ENCODE measurements at regions of chr12 and their contacts with region 1.

Region 1: DNA sequence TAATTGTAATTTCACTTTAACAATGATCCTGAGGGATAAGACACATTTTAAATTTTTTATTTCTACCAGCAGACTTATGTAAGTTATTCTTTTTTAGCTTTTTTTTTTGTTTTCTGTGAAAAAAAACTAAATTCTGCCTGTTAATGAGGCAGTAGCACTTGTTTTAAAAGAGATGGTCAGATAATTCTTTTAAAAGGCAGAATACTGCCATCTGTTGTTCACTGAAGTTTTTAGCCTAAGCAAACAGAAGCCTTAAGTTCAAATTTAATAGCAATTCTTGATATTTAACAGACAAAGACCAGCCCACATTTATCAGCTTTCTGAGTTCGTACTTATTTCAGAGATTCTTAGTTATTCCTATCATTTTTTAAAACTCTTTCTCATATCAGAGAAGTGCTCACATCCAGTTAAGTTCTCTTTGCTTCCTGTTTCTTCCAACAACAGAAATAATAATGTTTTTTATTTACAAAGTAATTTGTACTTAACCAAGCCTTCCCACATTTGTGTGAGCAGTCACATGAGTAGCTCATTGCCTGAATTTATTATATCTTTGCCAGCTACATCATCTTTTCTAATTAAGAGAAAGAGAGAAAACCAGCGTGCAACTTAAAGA is 93.4 kb upstream of the SLCO1C1 start:
- DNase-seq: no peak
- H3K4me3 ChIP-seq: peak overlapping the region in 2 of 4 donors; percentile 1 to 5
- H3K27ac ChIP-seq: peak overlapping the region; percentile 42 to 80 (median 69)
- H3K4me1 ChIP-seq: peaks cover 0 to 44% (median 18%) of the 10 kb centered on the region in 4 donors
- H3K27me3 ChIP-seq: no peaks in the 10 kb centered on the region
- CTCF ChIP-seq: peak; percentile 20 to 57 (median 38)
- EP300 ChIP-seq: no peak
- POLR2A ChIP-seq: no peak

Region 2: GRCh38 chr12:19744734-19745218 is 857.0 kb before region 1 on chr12:
- intact Hi-C with region 1: loop called (anchors 5 kb)
- DNase-seq: no peak
- H3K4me3 ChIP-seq: no peak overlapping the region
- H3K27ac ChIP-seq: peak overlapping the region in 1 of 4 donors; percentile 17
- H3K4me1 ChIP-seq: peaks cover 0 to 42% (median 17%) of the 10 kb centered on the region in 4 donors
- H3K27me3 ChIP-seq: no peaks in the 10 kb centered on the region
- CTCF ChIP-seq: no peak
- EP300 ChIP-seq: peak in 1 of 4 donors; percentile 43
- POLR2A ChIP-seq: no peak

Region 3: DNA sequence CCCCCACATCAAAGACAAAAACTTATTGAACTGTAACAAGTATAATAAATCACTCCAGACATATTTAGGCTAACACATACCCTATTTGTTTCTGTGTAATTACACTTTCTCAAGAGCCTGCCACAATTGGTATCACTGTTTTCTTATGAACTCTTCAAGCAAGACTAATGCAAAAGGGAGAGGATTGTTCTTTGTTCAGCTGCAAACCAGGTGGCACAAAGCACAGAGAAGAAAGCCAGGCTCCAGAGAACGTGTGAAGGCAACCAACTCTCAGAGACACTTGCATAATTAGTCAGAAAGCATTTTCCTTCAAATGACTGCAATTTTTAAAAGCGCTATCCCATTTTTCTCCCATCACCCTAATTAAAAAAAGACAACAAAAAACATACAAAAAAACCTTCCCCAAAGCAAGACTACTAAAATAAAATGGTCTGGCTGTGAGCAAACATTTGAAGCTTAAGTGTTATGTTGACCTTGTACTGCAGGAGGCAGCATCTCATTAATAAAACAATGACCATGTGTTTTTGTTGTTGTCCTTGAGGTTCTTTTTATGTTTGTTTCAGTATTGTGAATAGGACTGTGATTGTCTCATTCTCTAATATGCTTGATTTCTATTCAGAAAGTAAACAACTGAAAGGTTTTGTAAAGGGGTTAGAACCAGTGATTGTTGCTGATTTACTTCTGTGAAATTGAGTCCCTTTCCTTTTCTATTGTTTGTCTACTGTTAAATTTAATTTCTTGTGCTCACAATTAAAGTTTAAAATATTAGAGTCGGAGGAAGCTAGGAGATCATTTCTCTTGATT is 686.2 kb before region 1 on chr12:
- intact Hi-C with region 1: loop called (anchors 10 kb)
- DNase-seq: no peak
- H3K4me3 ChIP-seq: no peak overlapping the region
- H3K27ac ChIP-seq: no peak overlapping the region
- H3K4me1 ChIP-seq: peaks cover 0 to 19% (median 12%) of the 10 kb centered on the region in 4 donors
- H3K27me3 ChIP-seq: no peaks in the 10 kb centered on the region
- CTCF ChIP-seq: peak; percentile 52 to 75 (median 54)
- EP300 ChIP-seq: no peak
- POLR2A ChIP-seq: no peak

Region 4: DNA sequence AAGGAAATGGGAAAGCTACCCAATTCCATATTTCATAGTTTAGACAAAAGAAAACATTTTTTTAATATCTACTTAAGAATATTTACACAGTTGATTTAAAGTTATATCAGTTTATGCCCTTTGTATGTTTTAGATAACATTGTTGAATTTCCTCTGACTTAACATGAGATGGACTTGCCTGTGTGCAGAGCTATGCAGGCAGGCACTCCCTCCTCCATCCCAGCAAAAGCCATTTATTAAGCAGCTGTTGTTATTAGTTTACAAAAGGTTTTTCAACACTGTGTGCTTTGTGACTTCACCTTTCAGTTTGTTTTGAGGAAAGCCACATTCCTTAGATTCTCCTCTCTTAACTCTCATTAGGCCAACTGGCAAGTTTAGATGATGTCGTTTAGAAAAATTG is 570.9 kb before region 1 on chr12:
- intact Hi-C with region 1: loop called (anchors 10 kb)
- DNase-seq: no peak
- H3K4me3 ChIP-seq: no peak overlapping the region
- H3K27ac ChIP-seq: peak overlapping the region in 2 of 4 donors; percentile 15 to 32
- H3K4me1 ChIP-seq: peaks cover 0 to 24% (median 2%) of the 10 kb centered on the region in 4 donors
- H3K27me3 ChIP-seq: no peaks in the 10 kb centered on the region
- CTCF ChIP-seq: no peak
- EP300 ChIP-seq: no peak
- POLR2A ChIP-seq: no peak

Region 5: GRCh38 chr12:20463913-20464524 is 137.8 kb before region 1 on chr12:
- intact Hi-C with region 1: loop called (anchors 2 kb)
- DNase-seq: no peak
- H3K4me3 ChIP-seq: no peak overlapping the region
- H3K27ac ChIP-seq: peak overlapping the region in 3 of 4 donors; percentile 70 to 77 (median 75)
- H3K4me1 ChIP-seq: peaks cover 0 to 37% (median 27%) of the 10 kb centered on the region in 4 donors
- H3K27me3 ChIP-seq: no peaks in the 10 kb centered on the region
- CTCF ChIP-seq: peak; percentile 48 to 59 (median 54)
- EP300 ChIP-seq: no peak
- POLR2A ChIP-seq: no peak

Region 6: DNA sequence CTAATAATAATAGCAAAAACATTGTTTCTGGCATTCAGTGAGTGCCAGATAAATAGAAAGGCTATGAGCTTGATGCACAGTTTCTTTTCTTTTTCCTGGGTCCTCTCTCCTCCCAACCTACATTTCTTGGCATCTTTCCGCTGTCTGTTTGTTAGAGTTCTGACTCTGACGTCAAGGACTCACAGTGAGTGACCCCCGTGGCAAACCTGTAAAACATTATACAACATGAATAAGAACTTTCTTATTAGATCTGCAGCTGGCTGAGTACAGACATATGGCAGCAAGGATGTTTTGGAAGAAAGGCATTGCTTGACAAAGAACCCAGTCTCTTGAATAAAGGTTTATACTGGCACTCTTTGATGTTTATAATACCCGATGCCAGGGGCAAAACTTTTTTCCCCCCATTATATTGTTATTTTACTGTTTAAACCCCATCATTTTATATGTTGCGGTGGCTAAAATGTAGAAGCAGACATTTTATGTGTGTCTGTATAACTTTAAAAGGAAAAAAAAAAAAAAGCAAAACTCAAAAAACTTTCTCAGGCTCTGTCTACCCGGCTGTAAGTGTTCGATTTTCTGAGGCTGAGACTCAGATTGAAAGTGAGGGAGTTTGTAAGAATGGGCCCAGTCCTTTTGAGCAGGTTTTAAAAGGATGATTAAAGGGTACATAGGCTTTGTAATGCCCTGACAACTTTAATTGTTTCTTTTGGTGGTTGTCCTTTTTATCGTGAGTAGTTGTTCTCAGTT is 74.2 kb before region 1 on chr12:
- intact Hi-C with region 1: no loop called
- DNase-seq: no peak
- H3K4me3 ChIP-seq: peak overlapping the region in 3 of 4 donors; percentile 5 to 20 (median 9)
- H3K27ac ChIP-seq: peak overlapping the region; percentile 66 to 78 (median 70)
- H3K4me1 ChIP-seq: peaks cover 0 to 44% (median 15%) of the 10 kb centered on the region in 4 donors
- H3K27me3 ChIP-seq: no peaks in the 10 kb centered on the region
- CTCF ChIP-seq: no peak
- EP300 ChIP-seq: no peak
- POLR2A ChIP-seq: no peak